Naive thymus-derived CD4-positive, alpha-beta T cell (primary cell): ENCODE measurements at regions of chr3 and their contacts with region 1.

Region 1: GRCh38 chr3:44338010-44338827 is at the start of gene TCAIM:
- DNase-seq: peak; percentile 97 to 100 (median 100)
- ATAC-seq: peak; percentile 97
- H3K4me3 ChIP-seq: peak within 1 kb of the TSS; percentile 91
- H3K4me3 Mint-ChIP-seq: peak within 1 kb of the TSS; percentile 92 to 99 (median 96)
- H3K27ac ChIP-seq: peak within 1 kb of the TSS; percentile 89
- H3K27ac Mint-ChIP-seq: peak within 1 kb of the TSS; percentile 87 to 99 (median 97)
- H3K4me1 ChIP-seq: peaks cover 14 to 16% of the 10 kb centered on the region in 2 donors
- H3K4me1 Mint-ChIP-seq: peaks cover 12 to 45% (median 34%) of the 10 kb centered on the region in 7 donors
- H3K27me3 ChIP-seq: no peaks in the 10 kb centered on the region
- H3K27me3 Mint-ChIP-seq: peaks cover 5 to 14% (median 7%) of the 10 kb centered on the region in 5 donors
- total RNA-seq, gene TCAIM: 7.7 to 19.8 (median 16.1) TPM

Region 2: DNA sequence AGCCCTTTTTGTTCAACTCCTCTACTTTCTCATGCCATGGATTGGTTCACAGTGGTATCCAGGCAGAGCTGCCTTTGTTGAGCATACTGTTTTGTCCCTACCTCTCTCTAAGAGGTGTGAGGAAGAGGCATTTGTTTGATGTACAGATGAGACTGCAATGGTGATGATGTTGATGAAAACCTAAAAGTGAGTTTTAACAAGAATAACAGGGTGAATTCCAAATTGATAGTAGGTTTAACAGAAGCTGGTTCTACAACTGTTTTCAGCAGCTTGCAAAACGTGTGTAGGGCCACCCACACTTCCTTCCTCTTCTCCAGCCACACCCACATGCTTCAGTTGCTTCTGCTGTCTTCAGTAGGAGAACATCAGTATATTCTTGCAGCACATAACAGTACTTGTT is 1041.7 kb before region 1 on chr3:
- CTCF ChIA-PET with region 1: no interaction called
- POLR2A ChIA-PET with region 1: no interaction called
- intact Hi-C with region 1: loop called in 1 of 2 experiments (anchors 10 kb)
- DNase-seq: peak in 8 of 9 donors; percentile 51 to 93 (median 86)
- ATAC-seq: peak; percentile 95
- H3K4me3 ChIP-seq: peak overlapping the region; percentile 53
- H3K4me3 Mint-ChIP-seq: peak overlapping the region; percentile 81 to 99 (median 87)
- H3K27ac ChIP-seq: peak overlapping the region; percentile 89
- H3K27ac Mint-ChIP-seq: peak overlapping the region; percentile 92 to 99 (median 96)
- H3K4me1 ChIP-seq: peaks cover 76 to 78% of the 10 kb centered on the region in 2 donors
- H3K4me1 Mint-ChIP-seq: peaks cover 46 to 97% (median 83%) of the 10 kb centered on the region in 7 donors
- H3K27me3 ChIP-seq: no peaks in the 10 kb centered on the region
- H3K27me3 Mint-ChIP-seq: no peaks in the 10 kb centered on the region

Region 3: GRCh38 chr3:43759297-43759782 is 578.9 kb before region 1 on chr3:
- CTCF ChIA-PET with region 1: no interaction called
- POLR2A ChIA-PET with region 1: interaction called, 3 read pairs
- intact Hi-C with region 1: loop called in 1 of 2 experiments (anchors 5 kb)
- DNase-seq: peak in 5 of 9 donors; percentile 2 to 30 (median 26)
- ATAC-seq: peak; percentile 34
- H3K4me3 ChIP-seq: no peak overlapping the region
- H3K4me3 Mint-ChIP-seq: peak overlapping the region in 1 of 10 donors; percentile 12
- H3K27ac ChIP-seq: no peak overlapping the region
- H3K27ac Mint-ChIP-seq: peak overlapping the region in 5 of 9 donors; percentile 56 to 97 (median 84)
- H3K4me1 ChIP-seq: peaks cover 8 to 41% of the 10 kb centered on the region in 2 donors
- H3K4me1 Mint-ChIP-seq: peaks cover 19 to 54% (median 51%) of the 10 kb centered on the region in 7 donors
- H3K27me3 ChIP-seq: no peaks in the 10 kb centered on the region
- H3K27me3 Mint-ChIP-seq: peaks cover 0 to 9% (median 0%) of the 10 kb centered on the region in 5 donors

Region 4: GRCh38 chr3:44065311-44066094 is 272.7 kb before region 1 on chr3:
- CTCF ChIA-PET with region 1: no interaction called
- POLR2A ChIA-PET with region 1: no interaction called
- intact Hi-C with region 1: no loop called
- DNase-seq: no peak
- ATAC-seq: no peak
- H3K4me3 ChIP-seq: no peak overlapping the region
- H3K4me3 Mint-ChIP-seq: no peak overlapping the region
- H3K27ac ChIP-seq: no peak overlapping the region
- H3K27ac Mint-ChIP-seq: no peak overlapping the region
- H3K4me1 ChIP-seq: no peaks in the 10 kb centered on the region
- H3K4me1 Mint-ChIP-seq: peaks cover 2 to 3% (median 2%) of the 10 kb centered on the region in 7 donors
- H3K27me3 ChIP-seq: no peaks in the 10 kb centered on the region
- H3K27me3 Mint-ChIP-seq: peaks cover 0 to 16% (median 6%) of the 10 kb centered on the region in 5 donors

Region 5: DNA sequence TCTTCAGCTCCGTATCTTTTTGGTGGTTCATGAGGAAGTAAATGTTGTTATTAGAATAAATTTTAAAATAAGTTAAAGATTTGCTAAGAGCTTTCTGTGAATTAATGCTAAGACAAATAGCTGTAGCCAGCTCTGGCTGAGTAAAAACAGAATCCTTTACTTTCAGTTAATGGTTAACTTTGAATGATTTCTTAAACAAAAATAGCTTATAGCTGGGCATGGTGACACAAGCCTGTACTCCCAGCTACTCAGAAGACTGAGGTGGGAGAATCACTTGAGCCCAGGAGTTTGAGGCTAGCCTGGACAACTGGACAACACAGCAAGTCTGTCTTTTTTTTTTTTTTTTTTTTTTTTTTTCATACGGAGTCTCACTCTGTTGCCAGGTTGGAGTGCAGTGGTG is 25.4 kb after region 1 on chr3:
- CTCF ChIA-PET with region 1: no interaction called
- POLR2A ChIA-PET with region 1: no interaction called
- intact Hi-C with region 1: no loop called
- DNase-seq: no peak
- ATAC-seq: no peak
- H3K4me3 ChIP-seq: no peak overlapping the region
- H3K4me3 Mint-ChIP-seq: no peak overlapping the region
- H3K27ac ChIP-seq: no peak overlapping the region
- H3K27ac Mint-ChIP-seq: no peak overlapping the region
- H3K4me1 ChIP-seq: no peaks in the 10 kb centered on the region
- H3K4me1 Mint-ChIP-seq: no peaks in the 10 kb centered on the region
- H3K27me3 ChIP-seq: no peaks in the 10 kb centered on the region
- H3K27me3 Mint-ChIP-seq: no peaks in the 10 kb centered on the region

Region 6: GRCh38 chr3:44510000-44510368 is 171.8 kb after region 1 on chr3:
- CTCF ChIA-PET with region 1: no interaction called
- POLR2A ChIA-PET with region 1: interaction called, 8 read pairs
- intact Hi-C with region 1: loop called (anchors 1 kb)
- DNase-seq: peak in 3 of 9 donors; percentile 3 to 19 (median 12)
- ATAC-seq: peak; percentile 23
- H3K4me3 ChIP-seq: peak overlapping the region; percentile 73
- H3K4me3 Mint-ChIP-seq: peak overlapping the region; percentile 93 to 98 (median 96)
- H3K27ac ChIP-seq: peak overlapping the region; percentile 92
- H3K27ac Mint-ChIP-seq: peak overlapping the region; percentile 78 to 97 (median 93)
- H3K4me1 ChIP-seq: peaks cover 6 to 19% of the 10 kb centered on the region in 2 donors
- H3K4me1 Mint-ChIP-seq: peaks cover 30 to 52% (median 48%) of the 10 kb centered on the region in 7 donors
- H3K27me3 ChIP-seq: no peaks in the 10 kb centered on the region
- H3K27me3 Mint-ChIP-seq: no peaks in the 10 kb centered on the region

Region 7: DNA sequence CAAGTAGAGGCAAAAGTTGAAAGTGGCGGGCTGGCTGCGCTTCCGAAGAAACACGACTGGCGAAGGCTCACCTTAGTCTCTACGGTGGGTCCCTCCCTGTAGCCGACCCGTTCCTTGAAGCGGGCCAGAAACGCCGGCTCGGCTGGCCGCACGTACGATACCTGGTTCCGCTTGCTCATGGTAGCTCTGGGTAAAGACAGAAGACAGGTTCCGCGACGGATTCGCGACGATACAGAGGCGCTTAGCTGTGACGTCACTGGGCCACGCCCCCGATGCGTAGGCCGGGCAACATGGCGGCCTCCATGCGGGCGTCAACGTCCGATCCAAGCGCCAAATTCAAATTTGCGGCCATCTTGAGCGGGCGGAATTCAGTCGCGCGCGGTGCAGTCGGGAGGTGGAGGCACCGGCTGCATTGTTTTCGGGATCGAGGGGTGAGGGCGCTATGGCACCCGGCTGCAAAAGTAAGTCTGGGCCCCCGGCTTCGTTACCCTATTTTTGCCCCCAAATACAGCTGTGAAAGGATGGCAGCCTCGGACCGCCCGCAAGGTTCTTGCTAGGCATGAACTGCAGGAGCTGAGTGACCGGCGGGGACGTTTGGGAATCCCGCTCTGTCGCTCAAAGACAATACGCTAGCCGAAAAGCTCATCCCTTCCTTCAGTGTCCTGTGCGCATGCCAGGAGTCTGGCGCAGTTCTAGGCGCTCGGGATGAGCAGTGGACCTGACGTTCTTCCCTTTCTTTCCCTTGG is 423.4 kb after region 1 on chr3 and contains the starts of genes KIAA1143 and KIF15:
- CTCF ChIA-PET with region 1: no interaction called
- POLR2A ChIA-PET with region 1: interaction called, 14 read pairs
- intact Hi-C with region 1: loop called (anchors 1 kb)
- DNase-seq: peak; percentile 92 to 98 (median 94)
- ATAC-seq: peak; percentile 100
- H3K4me3 ChIP-seq: peak within 1 kb of the TSS; percentile 99
- H3K4me3 Mint-ChIP-seq: peak within 1 kb of the TSS; percentile 86 to 94 (median 90)
- H3K27ac ChIP-seq: peak within 1 kb of the TSS; percentile 82
- H3K27ac Mint-ChIP-seq: peak within 1 kb of the TSS; percentile 80 to 96 (median 92)
- H3K4me1 ChIP-seq: peaks cover 0 to 6% of the 10 kb centered on the region in 2 donors
- H3K4me1 Mint-ChIP-seq: peaks cover 16 to 51% (median 42%) of the 10 kb centered on the region in 7 donors
- H3K27me3 ChIP-seq: no peaks in the 10 kb centered on the region
- H3K27me3 Mint-ChIP-seq: peaks cover 0 to 3% (median 0%) of the 10 kb centered on the region in 5 donors
- total RNA-seq, gene KIAA1143: 17.5 to 44.4 (median 39.8) TPM
- total RNA-seq, gene KIF15: 0.11 to 31.9 (median 0.30) TPM

Region 8: DNA sequence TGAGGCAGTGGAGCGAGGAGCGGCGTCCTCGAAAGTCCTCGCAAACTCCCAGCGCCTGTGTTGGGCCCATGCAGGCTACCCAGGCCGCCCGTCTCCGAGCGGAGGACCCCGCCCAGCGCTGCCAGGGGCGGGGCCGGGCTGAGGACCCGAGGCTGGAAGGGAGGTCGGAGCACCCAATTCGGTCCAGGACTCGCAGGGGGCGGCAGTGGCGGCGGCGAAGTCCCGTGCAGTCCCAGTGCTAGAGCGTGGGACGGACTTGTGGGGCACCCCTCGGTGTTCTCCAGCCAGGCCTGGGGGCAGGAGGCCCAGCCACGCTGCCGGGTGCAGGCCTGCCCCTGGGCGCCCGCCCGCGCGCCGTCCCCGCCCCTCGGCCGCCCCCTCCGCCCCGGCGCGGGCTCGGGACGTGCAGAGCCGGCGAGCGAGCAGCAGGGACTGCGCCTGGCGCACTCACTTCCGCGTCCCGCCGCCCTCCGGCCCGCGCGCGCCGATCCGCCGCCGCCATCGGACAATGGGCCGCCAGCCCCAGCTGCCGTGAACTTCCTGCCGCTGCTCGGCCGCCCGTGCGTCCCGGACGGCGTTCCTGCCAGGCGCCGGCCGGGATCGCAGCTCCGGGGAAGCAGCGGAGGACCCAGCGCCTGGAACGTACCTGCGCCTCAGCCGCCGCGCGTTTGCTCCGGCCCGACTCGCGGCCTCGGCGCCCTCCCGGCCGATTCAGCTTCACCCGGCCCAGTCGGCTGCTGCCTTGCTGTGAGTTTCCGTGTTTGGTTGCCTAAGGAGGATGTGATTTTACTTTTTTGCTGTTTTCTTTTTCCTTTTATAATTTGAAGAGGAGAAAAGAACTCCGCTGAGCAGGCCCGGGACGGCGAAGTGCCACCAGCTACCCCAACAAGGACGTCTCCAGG is 1255.7 kb after region 1 on chr3:
- CTCF ChIA-PET with region 1: no interaction called
- POLR2A ChIA-PET with region 1: no interaction called
- intact Hi-C with region 1: loop called in 1 of 2 experiments (anchors 1 kb)
- DNase-seq: peak; percentile 46 to 83 (median 70)
- ATAC-seq: peak; percentile 83
- H3K4me3 ChIP-seq: peak overlapping the region; percentile 71
- H3K4me3 Mint-ChIP-seq: peak overlapping the region; percentile 84 to 99 (median 90)
- H3K27ac ChIP-seq: peak overlapping the region; percentile 72
- H3K27ac Mint-ChIP-seq: peak overlapping the region; percentile 85 to 96 (median 91)
- H3K4me1 ChIP-seq: peaks cover 44 to 58% of the 10 kb centered on the region in 2 donors
- H3K4me1 Mint-ChIP-seq: peaks cover 48 to 61% (median 55%) of the 10 kb centered on the region in 7 donors
- H3K27me3 ChIP-seq: no peaks in the 10 kb centered on the region
- H3K27me3 Mint-ChIP-seq: peaks cover 0 to 3% (median 0%) of the 10 kb centered on the region in 5 donors